A549 (cell line): ENCODE measurements at regions of chr6 and their contacts with region 1.

Region 1: DNA sequence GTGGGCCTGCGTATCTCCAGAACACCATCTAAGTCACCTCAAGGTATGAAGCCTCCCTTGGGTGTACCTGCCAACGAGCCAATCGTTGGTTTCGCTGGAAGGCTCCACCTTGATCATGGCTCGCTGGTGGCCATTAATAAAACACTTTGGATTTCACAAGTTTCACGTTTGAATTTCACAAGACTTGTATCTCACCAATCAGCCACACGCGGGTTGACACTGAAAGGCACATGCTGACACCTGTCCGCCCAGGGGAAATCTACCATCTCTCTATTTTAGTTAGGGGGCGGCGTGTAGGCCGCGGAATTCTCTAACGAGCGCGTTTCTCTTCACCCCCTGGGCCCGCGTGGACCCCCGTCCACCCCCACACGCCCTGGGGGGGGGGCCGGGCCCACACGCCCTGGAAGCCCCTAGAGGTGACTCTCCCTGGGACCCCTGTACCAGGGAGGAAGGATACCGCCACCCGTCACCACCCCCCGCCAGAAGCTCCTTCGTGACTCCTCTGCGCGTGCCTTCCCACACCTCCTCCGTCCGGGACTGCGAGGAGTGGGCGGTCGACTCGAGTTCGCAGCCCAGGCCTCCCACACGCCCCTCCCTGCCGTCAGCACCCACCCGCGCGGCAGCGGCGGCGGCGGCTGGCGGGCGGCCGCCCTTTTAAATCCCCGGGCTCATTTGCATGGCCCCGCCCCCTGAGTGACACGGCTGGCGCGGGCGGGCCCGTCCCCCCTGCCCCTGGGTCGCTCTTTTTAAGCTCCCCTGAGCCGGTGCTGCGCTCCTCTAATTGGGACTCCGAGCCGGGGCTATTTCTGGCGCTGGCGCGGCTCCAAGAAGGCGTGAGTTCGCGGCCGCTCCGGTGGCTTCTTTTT is at the start of gene HMGA1:
- DNase-seq: peak; percentile 64 to 90
- ATAC-seq: peak; percentile 66 to 82; a peak in 5 of 6 replicates
- H3K4me3 ChIP-seq: peak within 1 kb of the TSS; percentile 83
- H3K27ac ChIP-seq: peak within 1 kb of the TSS; percentile 98 to 99
- H3K4me1 ChIP-seq: peaks cover 45% of the 10 kb centered on the region
- CTCF ChIP-seq: no peak
- EP300 ChIP-seq: no peak
- POLR2A ChIP-seq: peak; percentile 96
- RAD21 ChIP-seq: no peak
- polyA plus RNA-seq, gene HMGA1: 119 and 127 TPM in 2 replicates

Region 2: DNA sequence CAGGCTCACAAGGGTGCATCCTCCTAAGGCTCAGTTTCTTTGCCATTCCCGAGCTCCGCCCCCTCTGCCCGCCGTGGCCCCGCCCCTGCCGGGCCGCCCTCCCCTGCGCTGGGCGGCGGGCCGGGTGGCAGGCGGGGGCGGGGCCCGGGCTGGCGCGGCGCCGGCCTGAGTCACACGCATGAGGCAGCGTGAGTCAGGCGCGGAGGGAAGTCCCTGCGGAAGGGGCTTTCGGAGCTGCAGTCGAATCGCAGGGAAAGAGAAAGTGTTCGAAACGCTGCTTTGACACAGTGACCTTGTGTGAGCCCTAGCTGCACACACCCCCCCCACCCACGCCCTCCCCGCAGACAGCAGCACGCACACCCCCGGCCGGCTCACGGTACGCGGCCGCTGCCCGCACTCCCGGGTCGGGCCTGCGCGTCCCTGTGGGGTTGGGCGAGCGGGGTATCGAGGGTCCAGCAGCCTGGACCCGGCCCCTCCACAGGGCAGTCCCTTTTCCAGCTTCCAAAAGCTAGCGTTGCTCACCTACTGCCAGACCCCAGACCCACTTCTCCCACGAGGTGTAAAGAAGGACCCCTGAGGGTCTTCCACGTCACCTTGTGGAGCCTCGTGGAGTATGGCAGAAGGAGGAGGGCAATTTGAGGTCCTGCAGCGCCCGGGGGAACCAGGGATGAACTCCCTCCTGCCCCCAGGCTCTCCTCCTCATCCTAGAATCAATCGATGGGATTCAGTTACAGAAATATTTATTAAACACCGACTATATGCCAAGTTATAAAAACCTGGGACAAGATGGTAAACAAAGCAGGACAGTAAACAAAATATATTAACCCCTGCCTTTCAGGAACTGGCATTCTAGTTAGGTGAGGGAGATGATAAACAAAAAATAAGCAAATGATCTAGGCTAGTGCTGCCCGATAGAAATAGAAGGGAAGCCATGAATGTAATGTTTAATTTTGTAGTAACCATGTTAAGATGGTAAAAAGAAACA is 12.1 kb before region 1 on chr6:
- CTCF ChIA-PET with region 1: interaction called, 6 read pairs
- POLR2A ChIA-PET with region 1: interaction called, 39 read pairs
- DNase-seq: peak; percentile 85 to 87
- ATAC-seq: peak; percentile 87 to 90
- H3K4me3 ChIP-seq: peak overlapping the region; percentile 49
- H3K27ac ChIP-seq: peak overlapping the region; percentile 90 to 98
- H3K4me1 ChIP-seq: peaks cover 20% of the 10 kb centered on the region
- CTCF ChIP-seq: no peak
- EP300 ChIP-seq: no peak; a peak in 1 of 5 replicates
- POLR2A ChIP-seq: peak; percentile 49
- RAD21 ChIP-seq: no peak

Region 3: GRCh38 chr6:34248727-34249551 is 12.6 kb after region 1 on chr6 and contains the start of gene SMIM29:
- CTCF ChIA-PET with region 1: interaction called, 6 read pairs
- POLR2A ChIA-PET with region 1: interaction called, 12 read pairs
- DNase-seq: peak; percentile 74 to 90
- ATAC-seq: peak; percentile 64 to 76
- H3K4me3 ChIP-seq: peak within 1 kb of the TSS; percentile 76
- H3K27ac ChIP-seq: peak within 1 kb of the TSS; percentile 92 to 93
- H3K4me1 ChIP-seq: peaks cover 41% of the 10 kb centered on the region
- CTCF ChIP-seq: peak; percentile 70
- EP300 ChIP-seq: no peak
- POLR2A ChIP-seq: peak; percentile 47
- RAD21 ChIP-seq: peak; percentile 58 to 88
- polyA plus RNA-seq, gene SMIM29: 8.1 and 11.0 TPM in 2 replicates

Region 4: GRCh38 chr6:34392497-34393190 is 156.3 kb after region 1 on chr6 and contains the start of gene NUDT3:
- CTCF ChIA-PET with region 1: no interaction called
- POLR2A ChIA-PET with region 1: interaction called, 10 read pairs
- DNase-seq: peak; percentile 70 to 91
- ATAC-seq: peak; percentile 90 to 93
- H3K4me3 ChIP-seq: peak within 1 kb of the TSS; percentile 84
- H3K27ac ChIP-seq: peak within 1 kb of the TSS; percentile 95 to 99
- H3K4me1 ChIP-seq: peaks cover 15% of the 10 kb centered on the region
- CTCF ChIP-seq: peak; percentile 46; the same call in 2 of the 3 replicates
- EP300 ChIP-seq: no peak
- POLR2A ChIP-seq: peak; percentile 74
- RAD21 ChIP-seq: peak; percentile 46 to 66
- polyA plus RNA-seq, gene NUDT3: 12.9 and 13.4 TPM in 2 replicates

Region 5: GRCh38 chr6:34491091-34491430 is 254.7 kb after region 1 on chr6:
- CTCF ChIA-PET with region 1: no interaction called
- POLR2A ChIA-PET with region 1: no interaction called
- DNase-seq: no peak
- ATAC-seq: no peak
- H3K4me3 ChIP-seq: no peak overlapping the region
- H3K27ac ChIP-seq: no peak overlapping the region
- H3K4me1 ChIP-seq: no peaks in the 10 kb centered on the region
- CTCF ChIP-seq: no peak
- EP300 ChIP-seq: no peak
- POLR2A ChIP-seq: no peak
- RAD21 ChIP-seq: no peak